Common myeloid progenitor, CD34-positive (primary cell): ENCODE measurements at regions of chr22 and their contacts with region 1.

Region 1: DNA sequence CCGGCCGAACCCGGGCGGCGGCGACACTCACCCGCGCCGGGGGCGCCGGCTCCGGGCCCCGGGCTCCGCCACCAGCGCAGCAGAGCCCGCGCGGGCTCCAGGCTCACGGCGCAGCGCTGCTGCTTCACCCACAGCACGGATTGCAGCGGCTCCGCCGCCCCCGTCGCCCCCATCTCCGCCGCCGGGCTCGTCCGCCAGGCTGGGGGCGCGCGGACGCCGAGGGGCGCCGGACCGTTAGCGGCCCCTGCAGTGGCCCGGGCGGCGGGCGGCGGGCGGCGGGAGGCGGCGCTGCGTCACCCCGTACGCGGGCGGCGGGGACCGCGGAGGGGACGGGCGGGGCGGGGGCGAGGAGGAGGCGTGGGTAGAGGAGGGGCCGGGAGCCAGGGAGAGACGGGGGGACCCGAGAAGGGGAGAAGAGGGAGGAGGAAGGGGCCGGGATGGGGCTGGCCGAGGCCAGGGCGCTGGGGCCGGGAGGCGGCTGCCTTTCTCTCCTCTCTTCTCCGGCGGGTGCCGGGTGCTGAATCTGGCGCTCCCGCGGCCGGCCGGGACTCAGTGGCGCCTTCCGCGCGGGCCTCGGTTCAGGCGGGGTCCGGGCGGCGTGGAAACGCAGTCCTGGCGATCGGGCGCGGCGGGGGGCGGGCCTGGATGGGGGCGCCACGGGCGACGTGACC is at the start of gene CERK:
- DNase-seq: peak; percentile 54 to 72 (median 58)
- H3K4me3 ChIP-seq: peak within 1 kb of the TSS; percentile 68 to 91 (median 78)
- H3K27ac ChIP-seq: peak within 1 kb of the TSS; percentile 46 to 76
- H3K4me1 ChIP-seq: peaks cover 12 to 45% (median 41%) of the 10 kb centered on the region in 4 experiments
- H3K27me3 ChIP-seq: no peaks in the 10 kb centered on the region

Region 2: DNA sequence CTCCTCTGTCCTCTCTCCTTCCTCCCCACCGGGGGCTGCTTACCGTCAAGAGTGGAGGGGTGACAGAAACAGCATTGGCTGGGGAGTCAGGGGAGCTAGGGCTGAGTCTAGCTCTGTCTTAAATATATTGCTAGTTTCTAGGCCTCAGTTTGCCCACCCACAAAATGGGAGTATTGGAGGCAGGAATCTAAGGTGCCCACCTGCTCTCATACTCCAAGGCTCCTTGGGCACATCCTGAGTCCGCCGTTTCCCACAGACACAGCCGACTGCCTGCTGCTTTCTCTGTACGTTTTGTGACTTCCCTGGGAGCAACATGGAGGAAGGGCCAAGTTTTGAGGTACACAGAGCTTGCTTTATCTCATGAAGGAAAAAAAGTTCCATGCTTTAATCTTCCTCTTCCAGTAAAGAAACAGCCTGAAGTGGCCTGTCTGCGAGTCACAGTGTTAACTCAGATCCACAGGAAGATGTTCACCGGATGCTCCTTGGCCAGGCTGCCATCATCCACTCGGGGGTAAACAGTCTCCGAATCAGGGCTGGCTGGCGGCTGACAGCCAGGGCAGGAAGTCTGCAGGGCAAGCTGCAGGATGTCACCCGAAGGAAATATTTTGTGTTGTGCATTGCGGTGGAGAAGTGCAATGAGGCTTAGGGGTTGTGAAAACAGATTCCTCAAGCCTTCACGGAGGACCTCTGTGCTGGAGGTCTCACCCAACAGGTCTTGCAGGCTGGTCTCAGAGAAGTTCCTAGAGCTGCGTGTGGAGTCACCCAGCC is 11.0 kb after region 1 on chr22:
- CTCF ChIA-PET with region 1: interaction called, 34 read pairs
- POLR2A ChIA-PET with region 1: interaction called, 16 read pairs
- DNase-seq: peak; percentile 70 to 98 (median 97)
- H3K4me3 ChIP-seq: peak overlapping the region in 3 of 7 experiments; percentile 6 to 62 (median 13)
- H3K27ac ChIP-seq: peak overlapping the region; percentile 59 to 76
- H3K4me1 ChIP-seq: peaks cover 8 to 58% (median 44%) of the 10 kb centered on the region in 4 experiments
- H3K27me3 ChIP-seq: no peaks in the 10 kb centered on the region

Region 3: DNA sequence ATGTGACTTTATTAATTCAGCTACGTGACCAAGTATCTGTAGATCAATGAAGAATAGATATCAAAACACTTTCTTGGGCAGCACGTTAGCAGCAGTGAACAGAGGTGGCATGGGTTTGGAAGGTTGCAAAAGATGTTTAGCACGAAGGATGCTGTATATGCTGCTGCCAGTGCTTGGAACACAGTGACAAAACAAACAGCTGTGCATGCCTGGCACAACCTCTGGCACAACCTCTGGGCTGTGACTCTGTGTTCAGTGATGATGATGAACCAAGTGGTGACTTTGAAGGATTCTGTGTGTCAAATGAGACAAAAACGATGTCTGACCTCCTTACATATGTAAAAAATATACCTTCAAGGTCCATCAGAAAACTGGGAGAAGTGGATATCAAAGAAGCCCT is 129.0 kb after region 1 on chr22:
- CTCF ChIA-PET with region 1: no interaction called
- POLR2A ChIA-PET with region 1: no interaction called
- DNase-seq: no peak
- H3K4me3 ChIP-seq: no peak overlapping the region
- H3K27ac ChIP-seq: no peak overlapping the region
- H3K4me1 ChIP-seq: no peaks in the 10 kb centered on the region
- H3K27me3 ChIP-seq: no peaks in the 10 kb centered on the region

Region 4: DNA sequence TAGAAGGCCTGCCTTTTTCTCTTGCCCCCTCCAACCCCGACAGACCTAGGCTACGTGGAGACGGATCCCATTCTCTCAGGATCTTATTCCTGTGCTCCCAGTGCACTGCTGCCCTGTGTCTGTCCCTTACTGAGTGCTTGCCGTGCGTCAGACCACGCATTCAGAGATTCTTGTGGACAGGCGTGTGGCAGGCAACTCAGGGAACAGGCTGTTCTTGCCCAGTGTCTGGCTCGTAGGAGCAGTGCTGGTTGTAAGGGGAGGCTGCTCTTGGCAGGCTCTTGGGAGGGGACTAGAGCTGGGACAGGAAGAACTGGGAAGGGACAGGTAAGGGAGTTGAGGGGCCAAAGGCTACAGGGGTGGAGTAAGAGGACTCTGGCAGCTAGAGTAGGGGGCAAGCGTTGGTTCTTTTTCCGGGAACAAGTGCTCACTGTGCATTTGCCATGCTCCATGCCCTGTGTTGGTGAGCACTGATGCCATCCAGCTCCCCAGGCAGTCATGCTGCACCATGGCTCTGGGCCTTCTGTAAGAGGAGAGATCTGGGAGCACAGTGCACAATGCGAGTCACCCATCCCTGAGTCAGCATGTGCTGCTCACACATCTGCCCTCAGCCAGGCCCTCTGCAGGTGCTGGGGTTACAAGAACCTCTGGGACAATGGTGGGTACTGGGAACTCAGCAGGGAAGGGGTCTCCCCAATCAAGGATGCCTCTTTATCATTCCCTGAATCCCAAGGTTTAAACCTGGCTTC is 143.4 kb after region 1 on chr22:
- CTCF ChIA-PET with region 1: no interaction called
- POLR2A ChIA-PET with region 1: no interaction called
- DNase-seq: no peak
- H3K4me3 ChIP-seq: no peak overlapping the region
- H3K27ac ChIP-seq: no peak overlapping the region
- H3K4me1 ChIP-seq: no peaks in the 10 kb centered on the region
- H3K27me3 ChIP-seq: no peaks in the 10 kb centered on the region